Mammary epithelial cell (primary cell): ENCODE measurements at regions of chr17 and their contacts with region 1.

Region 1: DNA sequence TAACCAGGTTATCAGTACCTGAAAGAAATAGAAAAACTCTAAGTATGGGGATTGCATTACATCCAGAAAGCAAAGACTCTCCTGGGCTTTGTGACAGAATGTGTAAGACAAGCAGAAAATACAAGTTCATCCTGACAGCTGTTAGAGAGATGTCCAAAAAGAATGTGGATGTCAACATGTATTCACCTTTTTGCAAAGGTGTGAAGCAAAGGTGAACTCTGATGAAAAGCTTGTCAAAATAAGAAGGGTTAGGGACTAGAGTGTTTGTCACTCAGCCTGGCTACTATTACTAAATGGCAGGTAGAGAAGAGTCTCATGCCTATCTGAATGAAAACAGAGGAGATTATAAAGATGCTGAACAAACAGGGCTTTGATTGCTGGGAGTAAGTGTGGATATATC is 527.6 kb upstream of the CA10 start:
- DNase-seq: no peak
- H3K4me3 ChIP-seq: no peak overlapping the region
- H3K27ac ChIP-seq: no peak overlapping the region
- H3K4me1 ChIP-seq: no peaks in the 10 kb centered on the region
- H3K27me3 ChIP-seq: no peaks in the 10 kb centered on the region
- CTCF ChIP-seq: no peak

Region 2: DNA sequence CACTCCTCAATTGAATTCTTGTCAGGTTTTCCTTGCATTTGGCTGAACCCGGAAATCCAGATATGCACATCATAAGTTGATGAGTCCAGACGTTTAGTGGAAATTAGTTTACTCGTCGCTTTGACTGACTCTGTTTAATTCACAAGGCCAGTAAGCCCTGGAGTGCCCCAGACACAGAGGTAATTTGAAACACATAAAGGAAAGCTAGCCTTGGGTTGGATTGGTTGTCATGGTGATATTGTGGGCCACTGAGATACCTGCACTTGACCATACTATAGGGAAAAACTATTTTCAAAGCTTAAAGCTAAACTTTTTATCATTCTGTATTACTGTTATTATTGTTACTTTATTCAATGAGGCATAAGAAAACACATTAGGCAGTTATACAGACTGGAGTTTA is 349.3 kb before region 1 on chr17:
- CTCF ChIA-PET with region 1: no interaction called
- dilution Hi-C with region 1: no loop called
- in situ Hi-C with region 1: no loop called
- intact Hi-C with region 1: no loop called
- DNase-seq: no peak
- H3K4me3 ChIP-seq: no peak overlapping the region
- H3K27ac ChIP-seq: no peak overlapping the region
- H3K4me1 ChIP-seq: no peaks in the 10 kb centered on the region
- H3K27me3 ChIP-seq: no peaks in the 10 kb centered on the region
- CTCF ChIP-seq: no peak

Region 3: GRCh38 chr17:52744179-52744578 is 58.0 kb after region 1 on chr17:
- CTCF ChIA-PET with region 1: no interaction called
- dilution Hi-C with region 1: loop called (anchors 5 kb)
- in situ Hi-C with region 1: no loop called
- intact Hi-C with region 1: no loop called
- DNase-seq: no peak
- H3K4me3 ChIP-seq: no peak overlapping the region
- H3K27ac ChIP-seq: no peak overlapping the region
- H3K4me1 ChIP-seq: no peaks in the 10 kb centered on the region
- H3K27me3 ChIP-seq: no peaks in the 10 kb centered on the region
- CTCF ChIP-seq: no peak